IMR-90 (cell line): ENCODE measurements at regions of chr11 and their contacts with region 1.

Region 1: DNA sequence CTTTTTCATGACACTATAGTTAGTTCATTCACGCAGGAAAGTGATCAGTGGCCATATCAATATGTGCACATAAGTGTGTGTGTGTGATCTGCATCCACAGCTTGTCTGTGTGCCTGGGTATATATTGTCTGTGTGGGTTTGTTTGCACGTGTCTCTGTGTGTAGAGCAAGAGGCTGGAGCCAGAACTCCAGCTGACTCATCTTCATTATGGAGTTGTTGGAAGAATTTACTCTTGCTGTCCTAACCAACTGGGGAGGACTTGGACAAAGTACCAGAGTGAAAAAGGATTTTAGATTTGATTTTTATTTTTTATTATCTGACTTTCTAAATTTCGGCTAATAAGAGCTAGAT is 63.9 kb downstream of the TP53I11 start:
- DNase-seq: peak; percentile 86
- ATAC-seq: peak; percentile 91
- H3K4me3 ChIP-seq: no peak overlapping the region
- H3K27ac ChIP-seq: peak overlapping the region; percentile 11; the same call in 1 of the 2 replicates
- H3K4me1 ChIP-seq: peaks cover 11% of the 10 kb centered on the region
- H3K27me3 ChIP-seq: peaks cover 18% of the 10 kb centered on the region
- CTCF ChIP-seq: no peak
- POLR2A ChIP-seq: no peak
- RAD21 ChIP-seq: no peak

Region 2: DNA sequence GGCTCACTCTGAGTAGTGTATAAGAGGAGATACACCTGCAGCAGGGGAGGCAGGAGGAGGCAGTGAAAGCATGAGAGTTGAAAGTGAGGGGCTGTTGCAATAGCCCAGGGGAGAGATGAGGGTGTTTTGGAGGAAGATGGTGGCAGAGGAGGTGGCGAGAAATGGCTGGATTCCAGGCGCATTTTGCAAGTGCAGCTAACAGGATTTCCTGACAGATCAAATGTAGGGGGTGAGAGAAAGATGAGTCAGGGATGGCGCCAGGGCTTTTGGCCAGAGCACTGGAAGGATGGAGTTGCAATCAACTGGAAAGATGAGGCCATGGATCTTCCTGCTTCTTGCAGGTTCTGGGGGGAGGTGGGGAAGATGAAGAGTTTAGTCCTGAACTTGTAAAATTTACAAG is 176.8 kb before region 1 on chr11:
- CTCF ChIA-PET with region 1: no interaction called
- POLR2A ChIA-PET with region 1: no interaction called
- dilution Hi-C with region 1: no loop called
- in situ Hi-C with region 1: no loop called
- intact Hi-C with region 1: no loop called
- DNase-seq: peak; percentile 27
- ATAC-seq: 0 out of 2 replicates have a peak, but pooled peaks have one; percentile 35
- H3K4me3 ChIP-seq: no peak overlapping the region
- H3K27ac ChIP-seq: no peak overlapping the region
- H3K4me1 ChIP-seq: no peaks in the 10 kb centered on the region
- H3K27me3 ChIP-seq: peaks cover 35% of the 10 kb centered on the region
- CTCF ChIP-seq: no peak
- POLR2A ChIP-seq: no peak
- RAD21 ChIP-seq: no peak

Region 3: GRCh38 chr11:44743959-44744557 is 142.7 kb before region 1 on chr11:
- CTCF ChIA-PET with region 1: no interaction called
- POLR2A ChIA-PET with region 1: no interaction called
- dilution Hi-C with region 1: no loop called
- in situ Hi-C with region 1: no loop called
- intact Hi-C with region 1: no loop called
- DNase-seq: peak; percentile 44
- ATAC-seq: peak; percentile 92
- H3K4me3 ChIP-seq: no peak overlapping the region
- H3K27ac ChIP-seq: peak overlapping the region; percentile 48; the same call in 1 of the 2 replicates
- H3K4me1 ChIP-seq: peaks cover 6% of the 10 kb centered on the region; the same call in 1 of the 2 replicates
- H3K27me3 ChIP-seq: peaks cover 41% of the 10 kb centered on the region
- CTCF ChIP-seq: no peak
- POLR2A ChIP-seq: no peak
- RAD21 ChIP-seq: no peak

Region 4: DNA sequence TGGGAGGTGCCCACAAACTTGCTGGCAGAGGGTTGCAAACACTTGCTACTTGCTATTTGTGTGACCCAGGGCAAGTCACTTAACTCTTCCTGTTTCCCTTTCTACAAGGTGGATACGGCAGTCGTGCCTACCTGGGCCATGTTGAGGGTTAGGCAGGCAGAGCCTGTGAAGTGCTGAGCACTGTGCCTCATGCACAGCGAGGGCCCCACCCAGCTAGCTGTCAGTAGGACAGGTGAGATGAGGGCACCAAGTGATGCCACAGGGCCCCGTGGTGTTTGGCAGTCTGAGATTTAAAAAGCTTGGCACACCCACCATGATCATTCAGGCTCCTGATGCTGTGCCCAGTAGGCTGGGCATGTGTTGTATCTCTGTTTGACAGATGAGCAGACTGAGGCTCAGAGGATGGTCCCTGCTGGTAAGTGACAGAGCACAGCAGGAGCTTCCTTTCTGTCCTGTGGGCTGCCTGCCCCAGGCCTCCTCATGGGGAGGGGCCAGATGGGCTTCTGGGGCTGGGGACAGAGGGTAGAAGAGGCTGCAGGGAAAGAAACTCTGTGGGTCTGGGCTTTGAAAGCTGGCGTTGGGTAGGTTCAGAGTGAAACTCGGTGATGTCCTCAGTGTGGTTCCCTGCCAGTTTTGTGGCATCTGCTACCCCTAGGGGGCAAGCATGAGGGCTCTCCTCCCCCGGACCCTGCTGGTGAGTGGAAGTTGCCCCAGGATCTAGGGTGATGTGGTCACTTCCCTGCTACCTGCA is 100.7 kb before region 1 on chr11:
- CTCF ChIA-PET with region 1: no interaction called
- POLR2A ChIA-PET with region 1: no interaction called
- dilution Hi-C with region 1: no loop called
- in situ Hi-C with region 1: no loop called
- intact Hi-C with region 1: loop called (anchors 5 kb)
- DNase-seq: no peak
- ATAC-seq: peak; percentile 29; the same call in 1 of the 2 replicates
- H3K4me3 ChIP-seq: no peak overlapping the region
- H3K27ac ChIP-seq: no peak overlapping the region
- H3K4me1 ChIP-seq: peaks cover 4% of the 10 kb centered on the region; the same call in 1 of the 2 replicates
- H3K27me3 ChIP-seq: peaks cover 20% of the 10 kb centered on the region
- CTCF ChIP-seq: 0 out of 2 replicates have a peak, but pooled peaks have one; percentile 18
- POLR2A ChIP-seq: no peak
- RAD21 ChIP-seq: no peak

Region 5: GRCh38 chr11:44842220-44842619 is 44.5 kb before region 1 on chr11:
- CTCF ChIA-PET with region 1: no interaction called
- POLR2A ChIA-PET with region 1: no interaction called
- dilution Hi-C with region 1: no loop called
- in situ Hi-C with region 1: no loop called
- intact Hi-C with region 1: loop called (anchors 5 kb)
- DNase-seq: peak; percentile 96
- ATAC-seq: peak; percentile 88
- H3K4me3 ChIP-seq: no peak overlapping the region
- H3K27ac ChIP-seq: peak overlapping the region; percentile 93
- H3K4me1 ChIP-seq: peaks cover 16% of the 10 kb centered on the region
- H3K27me3 ChIP-seq: no peaks in the 10 kb centered on the region
- CTCF ChIP-seq: no peak
- POLR2A ChIP-seq: no peak
- RAD21 ChIP-seq: peak; percentile 24